Dorsolateral prefrontal cortex (tissue), 120 donors: ENCODE measurements at regions of chr20 and their contacts with region 1.

Region 1: DNA sequence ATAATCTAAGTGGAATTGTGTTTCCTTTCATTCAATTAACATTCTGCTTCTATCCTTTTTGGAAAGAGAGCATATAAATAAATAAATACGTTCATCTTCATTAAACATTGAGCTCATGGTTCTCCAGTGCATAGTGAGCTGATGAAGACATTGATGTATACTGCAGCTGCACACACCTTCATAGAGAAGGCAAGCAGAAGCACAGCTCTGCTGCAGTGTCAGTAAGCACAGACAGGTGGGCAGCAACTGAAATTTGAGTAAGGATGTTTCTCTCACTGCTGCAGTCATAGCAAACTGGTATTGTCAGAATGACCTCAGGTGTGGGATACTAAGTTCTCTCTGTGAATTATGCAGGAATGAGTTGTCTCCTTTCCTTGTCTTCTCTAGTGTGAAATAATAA is 202.9 kb downstream of the DOK5 start:
- DNase-seq: no peak
- H3K4me3 ChIP-seq: no peak overlapping the region
- H3K27ac ChIP-seq: no peak overlapping the region
- H3K27me3 ChIP-seq: peaks cover 0 to 43% (median 13%) of the 10 kb centered on the region in 45 donors
- CTCF ChIP-seq: no peak

Region 2: GRCh38 chr20:54510546-54511139 is 167.6 kb before region 1 on chr20:
- intact Hi-C with region 1: no loop called
- DNase-seq: peak in 6 of 10 donors; percentile 7 to 58 (median 30)
- H3K4me3 ChIP-seq: no peak overlapping the region
- H3K27ac ChIP-seq: peak overlapping the region in 1 of 59 donors; percentile 1
- H3K27me3 ChIP-seq: no peaks in the 10 kb centered on the region
- CTCF ChIP-seq: no peak

Region 3: DNA sequence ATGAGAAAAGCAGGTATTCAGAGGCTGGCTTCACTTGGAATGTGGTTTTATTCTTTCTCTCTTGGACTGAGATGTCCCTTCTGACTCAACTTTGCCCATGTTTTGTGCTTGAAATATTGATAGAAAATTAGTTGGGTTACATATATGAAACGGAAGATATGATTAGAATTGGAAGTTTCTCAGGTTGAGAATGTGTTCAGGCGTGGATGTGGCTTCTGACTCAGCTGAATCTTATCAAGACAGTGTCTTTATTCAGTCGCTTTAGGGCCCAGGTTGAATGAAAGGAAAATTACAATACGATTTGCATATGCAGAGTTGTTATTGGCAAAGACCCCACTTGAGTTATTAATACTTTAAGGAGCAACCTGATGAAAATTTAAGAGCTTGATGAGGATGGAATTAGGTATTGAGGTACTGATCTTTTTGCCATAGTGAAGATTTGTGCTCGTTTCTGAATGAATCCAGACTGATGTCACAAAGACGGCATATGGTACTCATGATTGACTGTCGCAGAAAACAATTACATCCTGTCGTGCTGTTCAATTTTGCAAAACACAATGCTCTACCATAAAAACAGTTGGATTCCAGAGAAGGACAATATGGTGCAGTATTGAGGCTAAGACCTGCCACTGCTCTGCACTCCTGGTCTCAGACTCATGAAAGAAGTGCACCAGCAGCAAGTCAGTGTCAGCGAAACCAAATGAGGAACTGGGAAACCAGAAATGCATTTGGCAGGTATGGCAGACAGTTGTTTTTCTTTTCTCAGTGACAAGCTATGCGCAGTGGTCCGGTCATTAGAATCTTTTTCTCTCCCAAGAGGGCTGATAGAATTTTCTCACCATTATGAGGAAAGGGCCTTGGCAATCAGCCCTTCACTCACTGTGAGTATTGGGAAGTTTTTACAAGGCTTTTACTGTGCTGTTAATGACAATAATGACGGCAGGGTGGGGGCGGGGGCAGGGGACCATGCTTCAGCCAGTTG is 44.6 kb before region 1 on chr20:
- intact Hi-C with region 1: no loop called
- DNase-seq: no peak
- H3K4me3 ChIP-seq: no peak overlapping the region
- H3K27ac ChIP-seq: no peak overlapping the region
- H3K27me3 ChIP-seq: peaks cover 0 to 35% (median 0%) of the 10 kb centered on the region in 45 donors
- CTCF ChIP-seq: no peak

Region 4: DNA sequence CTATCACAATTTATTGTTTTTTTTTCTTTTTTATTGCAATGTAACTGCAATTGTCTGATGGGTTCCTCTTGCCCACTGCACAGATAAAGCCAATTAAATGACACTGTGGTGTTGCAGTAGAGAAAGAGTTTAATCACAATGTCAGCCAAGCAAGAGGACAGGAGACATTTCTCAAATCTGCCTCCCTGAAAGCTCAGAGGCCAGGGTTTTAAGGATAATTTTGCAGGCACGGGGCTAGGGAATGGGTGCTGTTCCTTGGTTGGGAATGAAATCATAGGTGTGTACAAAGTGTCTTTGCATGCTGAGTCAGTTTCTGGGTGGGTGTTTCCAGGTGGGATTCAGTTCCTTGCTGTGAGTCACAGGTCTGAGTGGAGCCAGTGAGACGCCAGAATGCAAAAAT is 68.5 kb after region 1 on chr20:
- intact Hi-C with region 1: no loop called
- DNase-seq: no peak
- H3K4me3 ChIP-seq: no peak overlapping the region
- H3K27ac ChIP-seq: no peak overlapping the region
- H3K27me3 ChIP-seq: peaks cover 0 to 11% (median 0%) of the 10 kb centered on the region in 45 donors
- CTCF ChIP-seq: no peak

Region 5: DNA sequence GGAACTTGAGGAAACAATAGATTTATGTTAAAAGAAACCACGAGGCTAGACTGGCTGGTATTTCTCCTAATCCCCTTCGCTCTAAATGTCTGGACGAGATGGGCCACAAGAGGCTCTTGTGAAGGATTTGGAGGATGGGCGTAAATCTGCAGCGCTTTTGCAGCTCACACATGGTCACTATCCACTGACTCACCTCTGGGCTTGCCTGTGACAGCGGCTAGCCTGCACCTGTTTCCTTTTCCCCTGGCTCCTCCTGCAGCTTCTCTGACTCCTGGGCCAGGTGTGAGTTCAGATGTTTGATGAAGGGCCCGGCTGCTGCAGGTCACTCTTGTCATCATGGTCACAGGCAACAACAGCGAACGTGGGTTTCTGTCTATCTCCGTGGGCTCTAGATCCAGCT is 697.7 kb after region 1 on chr20:
- intact Hi-C with region 1: no loop called
- DNase-seq: no peak
- H3K4me3 ChIP-seq: no peak overlapping the region
- H3K27ac ChIP-seq: no peak overlapping the region
- H3K27me3 ChIP-seq: peaks cover 0 to 7% (median 0%) of the 10 kb centered on the region in 45 donors
- CTCF ChIP-seq: no peak

Region 6: GRCh38 chr20:56187534-56188198 is 1509.4 kb after region 1 on chr20:
- intact Hi-C with region 1: loop called in 1 of 2 experiments (anchors 10 kb)
- DNase-seq: peak in 2 of 10 donors; percentile 8 to 22
- H3K4me3 ChIP-seq: peak overlapping the region in 2 of 59 donors; percentile 7 to 22
- H3K27ac ChIP-seq: no peak overlapping the region
- H3K27me3 ChIP-seq: peaks cover 0 to 4% (median 0%) of the 10 kb centered on the region in 45 donors
- CTCF ChIP-seq: peak in 48 of 56 donors; percentile 15 to 65 (median 42)